AG04450 (cell line): ENCODE measurements at regions of chr13 and their contacts with region 1.

Region 1: DNA sequence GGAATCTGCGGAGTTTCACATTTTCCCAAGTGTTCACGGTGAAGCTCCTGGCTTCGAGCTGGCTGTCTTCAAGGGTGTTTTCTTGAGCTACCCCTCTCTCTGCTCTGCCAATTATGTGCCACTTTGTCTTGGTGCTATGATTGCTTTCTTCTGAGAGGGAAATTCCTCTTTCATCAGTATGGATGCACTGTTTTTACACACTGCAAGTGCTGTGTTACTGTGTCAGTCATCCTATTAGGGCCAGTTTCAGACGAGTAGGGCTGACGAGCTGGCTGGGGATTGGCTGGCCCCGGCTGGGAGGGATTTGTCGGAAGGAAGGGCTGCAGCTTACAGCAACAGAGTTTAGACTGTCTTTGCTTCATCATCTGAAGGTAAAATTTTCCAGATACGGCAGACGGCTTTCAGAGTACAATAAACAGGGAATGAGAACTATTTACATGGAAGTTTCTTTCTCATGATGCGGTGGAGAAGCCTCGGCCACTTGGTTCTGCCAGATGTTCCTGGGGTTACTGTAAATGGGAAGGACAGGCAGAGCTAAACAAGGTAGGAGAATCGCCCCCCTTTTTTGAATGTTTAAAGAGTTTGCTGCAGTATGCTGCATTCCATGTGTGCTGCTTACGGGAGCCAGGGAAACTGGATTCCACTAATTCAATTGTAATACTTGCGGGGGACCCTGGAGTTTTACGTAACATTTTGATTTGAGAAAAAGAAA is at the start of gene MBNL2:
- DNase-seq: peak; percentile 84
- H3K4me3 ChIP-seq: peak within 1 kb of the TSS; percentile 82
- H3K27ac ChIP-seq: peak within 1 kb of the TSS; percentile 91
- H3K27me3 ChIP-seq: no peaks in the 10 kb centered on the region
- CTCF ChIP-seq: no peak
- polyA plus RNA-seq, gene MBNL2: 42.4 and 44.0 TPM in 2 replicates

Region 2: GRCh38 chr13:97134364-97135095 is 87.6 kb before region 1 on chr13:
- CTCF ChIA-PET with region 1: no interaction called
- POLR2A ChIA-PET with region 1: interaction called, 12 read pairs
- DNase-seq: no peak
- H3K4me3 ChIP-seq: no peak overlapping the region
- H3K27ac ChIP-seq: no peak overlapping the region
- H3K27me3 ChIP-seq: no peaks in the 10 kb centered on the region
- CTCF ChIP-seq: no peak

Region 3: DNA sequence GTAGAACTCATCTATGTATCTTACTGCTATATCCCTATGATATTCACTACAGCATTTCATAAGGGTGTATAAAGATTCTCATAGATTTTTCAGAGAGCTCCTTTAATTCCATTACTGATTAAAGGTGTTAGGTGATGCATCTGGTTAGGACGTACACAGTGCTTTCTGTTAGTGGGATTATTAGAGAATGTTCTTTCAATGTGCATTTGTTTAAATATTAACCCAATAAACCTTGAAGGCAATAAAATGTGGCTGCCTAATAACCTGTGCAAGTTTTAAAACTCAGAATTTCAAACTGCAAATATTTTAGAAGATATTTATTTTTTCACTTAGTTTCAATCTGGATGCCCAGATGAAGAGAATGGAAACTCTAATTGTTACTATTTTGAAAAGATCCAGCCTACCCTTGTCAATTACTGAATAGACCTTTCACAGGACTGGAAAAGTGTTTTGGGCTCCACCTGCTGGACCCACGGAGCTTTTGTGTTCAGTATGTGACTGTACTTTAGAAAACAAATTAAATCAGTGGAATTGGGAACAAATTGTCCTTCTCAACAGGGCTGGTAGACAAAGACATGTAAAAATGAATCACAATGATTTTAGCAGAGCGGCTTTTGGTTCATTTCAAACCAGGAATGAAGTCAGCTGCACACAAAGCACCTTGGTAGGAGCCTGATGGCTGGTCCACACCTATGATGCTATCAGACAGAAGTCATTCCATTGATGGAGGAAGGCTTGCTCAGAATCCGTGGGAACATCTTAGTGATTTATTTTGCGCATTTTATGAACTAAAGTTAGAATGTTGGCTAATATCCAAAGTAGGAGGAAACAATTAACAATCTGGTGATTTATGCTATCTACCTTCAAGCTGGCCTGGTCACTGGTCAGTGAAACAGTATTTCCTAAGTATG is 122.4 kb after region 1 on chr13:
- CTCF ChIA-PET with region 1: interaction called, 11 read pairs
- POLR2A ChIA-PET with region 1: interaction called, 5 read pairs
- DNase-seq: no peak
- H3K4me3 ChIP-seq: no peak overlapping the region
- H3K27ac ChIP-seq: no peak overlapping the region
- H3K27me3 ChIP-seq: no peaks in the 10 kb centered on the region
- CTCF ChIP-seq: peak; percentile 80

Region 4: DNA sequence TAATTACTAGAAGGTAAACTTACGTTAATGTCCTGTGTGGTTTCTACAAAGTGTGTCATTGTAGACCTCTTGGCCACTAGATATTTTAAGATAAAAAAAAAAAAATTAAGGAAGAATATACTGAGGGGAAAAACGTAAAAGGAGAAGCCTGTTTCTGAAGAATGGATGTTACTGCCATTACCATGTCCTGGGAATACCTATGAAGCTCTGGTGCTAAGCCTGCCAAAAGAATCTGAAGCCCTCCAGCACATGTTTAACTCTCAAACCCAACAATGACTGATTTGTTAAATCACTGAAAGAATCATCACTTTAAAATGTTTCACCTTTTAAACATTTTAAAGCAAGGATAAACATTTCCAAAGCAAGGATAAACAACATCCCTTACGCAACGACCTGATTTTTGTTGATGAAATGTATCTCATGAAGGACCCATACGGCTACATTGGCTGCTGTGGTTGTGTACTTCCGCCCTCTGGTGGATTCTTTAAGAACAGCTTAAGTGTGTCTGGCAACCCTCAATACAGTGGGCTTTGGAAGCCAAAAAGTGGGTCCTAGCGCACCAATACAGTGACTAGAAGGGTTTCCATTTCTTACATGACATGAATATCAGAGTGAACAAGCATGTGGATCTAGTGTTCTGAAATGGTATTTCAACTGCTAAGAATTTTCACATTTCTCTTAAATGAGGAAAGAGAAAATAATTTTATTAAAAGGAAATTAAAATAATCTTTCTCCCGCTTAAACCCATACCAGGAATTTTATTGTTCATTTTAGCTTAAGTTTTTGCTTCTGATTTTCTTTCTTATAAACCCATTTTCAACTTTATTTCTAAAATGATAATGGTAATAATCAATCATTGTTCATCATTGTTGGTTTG is 137.3 kb after region 1 on chr13:
- CTCF ChIA-PET with region 1: interaction called, 40 read pairs
- POLR2A ChIA-PET with region 1: interaction called, 4 read pairs
- DNase-seq: peak; percentile 87
- H3K4me3 ChIP-seq: no peak overlapping the region
- H3K27ac ChIP-seq: no peak overlapping the region
- H3K27me3 ChIP-seq: no peaks in the 10 kb centered on the region
- CTCF ChIP-seq: peak; percentile 93

Region 5: GRCh38 chr13:97695684-97696083 is 473.5 kb after region 1 on chr13:
- CTCF ChIA-PET with region 1: no interaction called
- POLR2A ChIA-PET with region 1: no interaction called
- DNase-seq: no peak
- H3K4me3 ChIP-seq: no peak overlapping the region
- H3K27ac ChIP-seq: no peak overlapping the region
- H3K27me3 ChIP-seq: no peaks in the 10 kb centered on the region
- CTCF ChIP-seq: no peak